PC-9 (cell line): ENCODE measurements at regions of chr3 and their contacts with region 1.

Region 1: DNA sequence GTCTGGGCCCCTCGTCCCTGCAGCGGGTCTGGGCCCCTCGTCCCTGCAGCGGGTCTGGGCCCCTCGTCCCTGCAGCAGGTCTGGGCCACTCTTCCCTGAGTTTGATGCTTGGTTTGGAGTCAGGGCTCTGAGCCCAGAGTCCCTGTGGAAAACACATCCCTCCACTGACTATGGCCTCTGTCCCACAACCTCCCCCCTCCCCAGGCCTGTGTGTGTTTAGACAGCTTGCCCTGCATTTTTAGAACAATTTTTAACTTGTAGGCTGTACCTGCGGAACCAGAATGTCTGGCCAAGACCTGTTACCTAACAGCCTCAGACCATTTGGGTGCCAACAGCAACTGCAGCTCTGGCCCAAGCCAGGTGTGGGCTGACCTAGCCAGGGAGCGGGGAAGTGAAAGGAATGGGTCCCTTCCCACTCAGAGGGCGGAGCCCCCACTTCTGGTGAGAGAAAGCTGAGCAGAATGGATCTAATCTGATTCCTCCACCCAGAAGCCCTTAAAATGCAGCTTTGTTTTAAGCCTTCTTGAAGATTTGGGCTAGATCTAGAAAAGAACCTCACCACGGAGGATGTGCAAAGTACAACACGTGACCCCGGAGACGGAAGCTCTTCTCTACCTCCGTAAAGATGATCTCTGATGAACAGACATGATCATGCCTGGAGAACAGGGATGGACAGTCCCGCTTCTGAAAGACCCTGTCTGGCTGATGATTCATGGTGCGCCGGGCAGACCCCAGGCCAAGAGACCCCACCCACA is 60.5 kb upstream of the TFRC start:
- DNase-seq: peak; percentile 87 to 92
- H3K4me3 ChIP-seq: peak overlapping the region; percentile 58
- H3K27ac ChIP-seq: peak overlapping the region; percentile 81
- H3K4me1 ChIP-seq: peaks cover 89% of the 10 kb centered on the region
- H3K27me3 ChIP-seq: no peaks in the 10 kb centered on the region
- CTCF ChIP-seq: 0 out of 2 replicates have a peak, but pooled peaks have one; percentile 16

Region 2: DNA sequence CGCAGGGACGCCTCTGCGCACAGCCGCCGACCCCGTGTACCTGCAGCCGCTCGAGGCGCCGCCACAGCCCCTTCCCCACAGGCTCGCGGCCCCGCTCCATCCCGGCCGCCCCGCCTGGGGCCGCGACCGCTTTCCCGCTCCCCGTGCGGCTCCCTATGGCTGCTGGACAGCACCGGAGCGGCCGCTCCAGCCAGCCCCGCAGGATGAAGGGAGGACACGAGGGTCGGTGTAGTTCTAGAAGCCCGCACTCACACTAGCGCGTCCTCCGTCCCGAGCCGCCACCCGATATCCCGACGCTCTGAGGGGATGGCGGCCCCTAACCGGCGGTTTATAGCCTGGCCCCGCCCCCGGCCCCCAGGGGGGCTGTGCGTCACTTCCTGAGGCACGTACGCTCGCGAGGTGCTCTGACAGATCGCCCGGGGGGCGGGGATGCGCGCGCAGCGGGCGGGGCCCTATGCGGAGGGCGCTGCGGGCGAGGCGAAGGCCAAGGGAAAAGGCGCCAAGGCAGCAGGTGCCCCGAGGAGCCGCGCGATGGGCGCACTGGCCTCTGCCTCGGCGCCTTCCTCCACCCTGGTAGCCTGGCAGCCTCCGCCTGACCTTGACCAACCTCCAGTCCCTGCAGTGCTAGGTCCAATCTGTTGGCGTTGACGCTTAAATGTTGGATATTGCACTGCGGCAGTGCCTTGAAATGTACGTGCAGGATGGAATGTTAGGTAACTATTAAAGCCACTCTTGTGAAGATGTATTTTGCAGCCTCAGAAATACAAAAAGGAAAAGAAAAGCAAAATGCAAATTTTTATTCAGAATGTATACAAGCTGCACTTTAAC is 60.4 kb before region 1 on chr3 and contains the start of gene TFRC:
- CTCF ChIA-PET with region 1: interaction called, 3 read pairs
- POLR2A ChIA-PET with region 1: interaction called, 6 read pairs
- intact Hi-C with region 1: loop called (anchors 1 kb)
- DNase-seq: peak; percentile 94 to 98
- H3K4me3 ChIP-seq: peak within 1 kb of the TSS; percentile 77
- H3K27ac ChIP-seq: peak within 1 kb of the TSS; percentile 76
- H3K4me1 ChIP-seq: peaks cover 28% of the 10 kb centered on the region
- H3K27me3 ChIP-seq: no peaks in the 10 kb centered on the region
- CTCF ChIP-seq: no peak
- total RNA-seq, gene TFRC: 134 and 195 TPM in 2 replicates

Region 3: DNA sequence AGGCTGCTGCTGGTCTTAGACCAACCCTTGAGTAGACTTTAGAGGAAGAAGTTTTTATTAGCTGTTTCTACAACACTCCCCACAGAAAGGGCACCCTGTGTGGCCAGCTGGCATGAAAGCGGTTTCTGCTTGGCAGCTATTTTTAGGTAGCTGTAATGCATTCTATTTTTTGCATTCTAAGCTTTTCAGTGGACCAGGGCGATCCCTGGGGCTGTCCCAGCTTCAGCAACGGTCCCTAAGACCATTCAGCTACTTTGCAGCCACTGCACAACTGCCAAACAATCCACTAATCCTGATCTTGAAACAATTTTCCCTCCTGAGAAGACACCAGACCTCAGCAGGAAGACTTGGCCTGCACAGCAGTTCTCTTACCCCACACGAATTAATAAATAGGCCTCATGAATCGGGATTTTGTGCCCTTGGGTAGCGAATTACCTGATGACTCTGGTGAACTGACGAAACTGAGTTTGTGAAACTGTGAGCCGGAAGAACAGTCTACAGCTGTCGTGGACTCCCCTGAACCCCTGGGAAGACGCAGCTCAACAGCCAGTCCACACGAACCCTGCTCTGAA is 45.9 kb before region 1 on chr3:
- CTCF ChIA-PET with region 1: no interaction called
- POLR2A ChIA-PET with region 1: no interaction called
- intact Hi-C with region 1: no loop called
- DNase-seq: no peak
- H3K4me3 ChIP-seq: no peak overlapping the region
- H3K27ac ChIP-seq: no peak overlapping the region
- H3K4me1 ChIP-seq: no peaks in the 10 kb centered on the region
- H3K27me3 ChIP-seq: no peaks in the 10 kb centered on the region
- CTCF ChIP-seq: no peak

Region 4: DNA sequence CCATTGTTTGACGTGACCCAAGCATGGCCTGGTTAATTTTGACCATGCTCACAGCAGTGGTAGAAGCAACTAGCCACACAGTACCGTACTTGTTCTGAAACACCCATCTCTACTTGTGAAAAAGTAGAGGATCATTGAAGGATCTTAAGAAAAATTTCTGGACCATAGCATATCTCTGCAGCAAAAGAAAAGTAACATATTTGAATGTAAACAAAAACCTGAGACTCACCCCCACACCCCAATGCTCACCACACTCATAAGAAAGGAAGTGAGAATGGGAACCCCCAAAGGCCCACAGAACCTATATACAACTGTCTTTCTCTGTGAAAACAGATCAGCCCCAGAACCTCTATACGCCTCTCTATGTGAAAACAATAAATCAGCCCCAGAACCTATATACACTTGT is 26.7 kb before region 1 on chr3:
- CTCF ChIA-PET with region 1: no interaction called
- POLR2A ChIA-PET with region 1: interaction called, 10 read pairs
- intact Hi-C with region 1: no loop called
- DNase-seq: no peak
- H3K4me3 ChIP-seq: no peak overlapping the region
- H3K27ac ChIP-seq: no peak overlapping the region
- H3K4me1 ChIP-seq: peaks cover 12% of the 10 kb centered on the region
- H3K27me3 ChIP-seq: no peaks in the 10 kb centered on the region
- CTCF ChIP-seq: no peak

Region 5: DNA sequence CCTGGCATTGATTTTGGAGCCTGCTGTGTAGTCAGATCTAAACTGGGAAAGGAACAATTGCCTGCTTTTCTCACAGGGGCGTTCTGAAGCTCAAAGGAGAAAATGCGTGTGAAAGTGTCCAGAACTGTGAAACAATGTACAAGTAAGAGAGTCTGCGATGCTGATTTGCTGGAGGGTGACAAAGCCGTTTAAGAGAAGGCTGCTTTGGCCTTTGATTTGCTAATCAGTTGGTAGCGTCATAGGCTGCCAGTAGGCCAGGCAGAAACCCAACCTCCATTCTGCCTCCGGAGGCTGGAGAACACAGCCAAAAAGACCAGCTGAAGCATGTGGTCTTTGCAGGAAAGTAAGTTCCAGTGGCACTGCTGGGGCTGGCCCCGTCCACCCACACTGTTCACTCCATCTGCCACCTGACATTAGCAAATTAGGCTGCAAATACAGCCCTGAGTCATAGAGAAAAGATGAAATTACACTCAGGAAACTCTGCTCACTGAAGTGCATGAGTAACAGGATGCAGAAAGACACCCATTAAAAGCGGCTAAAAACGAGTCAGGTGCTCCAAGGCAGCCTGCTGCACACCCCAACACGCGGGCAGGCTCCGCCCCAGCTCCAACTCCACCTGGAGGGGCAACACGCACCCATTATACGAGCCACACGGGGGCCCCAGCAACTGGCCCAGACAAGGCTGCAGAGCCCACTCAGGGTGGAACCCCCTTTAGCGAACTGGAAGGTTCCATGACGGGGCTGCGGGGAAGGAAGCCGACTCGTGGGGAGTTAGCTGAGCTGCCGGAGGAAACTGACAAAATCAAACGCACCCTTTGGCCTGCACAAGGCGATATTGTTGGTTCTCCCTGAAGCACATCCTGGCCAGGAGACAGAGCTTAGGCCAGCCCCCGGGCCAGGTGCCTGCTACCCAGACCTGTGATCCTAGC is 37.3 kb after region 1 on chr3:
- CTCF ChIA-PET with region 1: no interaction called
- POLR2A ChIA-PET with region 1: no interaction called
- intact Hi-C with region 1: loop called (anchors 2 kb)
- DNase-seq: peak in 1 of 2 experiments; percentile 29
- H3K4me3 ChIP-seq: no peak overlapping the region
- H3K27ac ChIP-seq: no peak overlapping the region
- H3K4me1 ChIP-seq: peaks cover 21% of the 10 kb centered on the region
- H3K27me3 ChIP-seq: no peaks in the 10 kb centered on the region
- CTCF ChIP-seq: no peak

Region 6: GRCh38 chr3:196192036-196192523 is 49.7 kb after region 1 on chr3:
- CTCF ChIA-PET with region 1: no interaction called
- POLR2A ChIA-PET with region 1: no interaction called
- intact Hi-C with region 1: loop called (anchors 2 kb)
- DNase-seq: no peak
- H3K4me3 ChIP-seq: no peak overlapping the region
- H3K27ac ChIP-seq: no peak overlapping the region
- H3K4me1 ChIP-seq: peaks cover 14% of the 10 kb centered on the region
- H3K27me3 ChIP-seq: no peaks in the 10 kb centered on the region
- CTCF ChIP-seq: no peak; the same call in 1 of the 2 replicates